Left ventricle myocardium inferior (tissue), 1 donor: ENCODE measurements at regions of chr3 and their contacts with region 1.

Region 1: DNA sequence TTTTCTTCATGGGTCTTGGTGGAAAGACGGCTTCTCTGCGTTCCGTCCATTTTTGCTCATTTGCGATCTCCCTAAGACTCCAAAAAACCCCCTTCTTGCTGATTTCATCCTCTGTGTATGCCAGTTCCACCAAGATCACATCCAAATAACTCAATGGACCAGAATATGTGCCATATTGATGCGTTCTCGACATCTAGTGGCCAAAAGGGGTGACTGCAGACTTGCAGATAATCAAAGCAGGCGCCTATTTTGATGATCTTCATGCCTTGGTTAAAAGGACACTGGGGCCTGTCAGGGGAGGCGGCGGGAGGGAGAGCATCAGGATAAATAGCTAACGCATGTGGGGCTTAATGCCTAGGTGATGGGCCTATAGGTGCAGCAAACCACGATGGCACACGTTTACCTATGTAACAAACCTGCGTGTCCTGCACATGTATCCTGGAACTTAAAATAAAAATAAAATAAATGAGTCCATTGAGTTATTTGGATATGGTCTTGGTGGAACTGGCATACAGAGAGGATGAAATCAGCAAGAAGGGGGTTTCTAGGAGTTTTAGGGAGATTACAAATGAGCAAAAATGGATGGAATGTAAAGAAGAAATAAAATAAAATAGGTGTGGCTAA is 104.2 kb upstream of the RAD18 start:
- DNase-seq: no peak
- H3K4me3 ChIP-seq: no peak overlapping the region
- H3K27ac ChIP-seq: peak overlapping the region; percentile 55
- H3K4me1 ChIP-seq: peaks cover 37% of the 10 kb centered on the region
- H3K27me3 ChIP-seq: no peaks in the 10 kb centered on the region
- CTCF ChIP-seq: peak; percentile 97

Region 2: GRCh38 chr3:8970971-8971589 is 96.4 kb before region 1 on chr3:
- intact Hi-C with region 1: loop called (anchors 5 kb)
- DNase-seq: no peak
- H3K4me3 ChIP-seq: no peak overlapping the region
- H3K27ac ChIP-seq: no peak overlapping the region
- H3K4me1 ChIP-seq: peaks cover 4% of the 10 kb centered on the region
- H3K27me3 ChIP-seq: peaks cover 24% of the 10 kb centered on the region
- CTCF ChIP-seq: no peak

Region 3: GRCh38 chr3:8987645-8988383 is 79.7 kb before region 1 on chr3:
- intact Hi-C with region 1: loop called (anchors 5 kb)
- DNase-seq: peak; percentile 53
- H3K4me3 ChIP-seq: no peak overlapping the region
- H3K27ac ChIP-seq: no peak overlapping the region
- H3K4me1 ChIP-seq: peaks cover 19% of the 10 kb centered on the region
- H3K27me3 ChIP-seq: no peaks in the 10 kb centered on the region
- CTCF ChIP-seq: peak; percentile 83

Region 4: DNA sequence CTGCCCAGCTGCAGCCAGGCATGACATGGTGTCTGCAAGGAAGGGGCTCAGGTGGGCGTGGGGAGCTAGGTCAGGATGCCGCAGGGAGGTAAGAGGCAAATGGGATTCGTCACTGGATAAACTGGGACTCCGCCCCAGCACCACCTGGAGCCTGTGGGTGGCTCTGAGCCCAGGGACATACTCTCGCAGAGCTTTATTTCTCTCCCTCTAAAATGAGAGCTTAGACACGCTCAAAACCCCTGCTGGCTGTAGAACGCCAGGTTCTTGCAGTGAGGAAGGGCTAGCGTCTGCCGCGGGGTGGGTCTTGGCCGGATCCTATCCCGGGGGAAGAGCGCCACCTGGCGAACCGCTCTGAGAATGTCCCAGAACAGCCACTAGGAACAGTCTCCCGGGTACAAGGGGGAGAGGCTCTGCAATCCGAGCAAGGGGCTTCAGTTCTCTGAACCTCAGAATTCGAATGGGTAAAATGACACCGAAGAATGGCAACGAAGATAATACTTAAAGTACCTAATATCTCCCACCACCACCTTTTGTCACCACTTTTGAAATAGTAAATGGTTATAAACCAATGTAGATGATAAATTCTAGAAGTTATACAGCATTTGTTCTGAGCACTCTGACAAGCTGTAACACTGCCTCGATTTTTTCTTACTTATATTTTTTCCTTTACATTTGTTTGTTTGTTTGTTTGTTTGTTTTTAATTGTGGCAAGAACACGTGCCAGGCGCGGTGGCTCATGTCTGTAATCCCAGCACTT is 235.1 kb after region 1 on chr3:
- intact Hi-C with region 1: loop called (anchors 5 kb)
- DNase-seq: peak; percentile 72
- H3K4me3 ChIP-seq: peak overlapping the region; percentile 53
- H3K27ac ChIP-seq: no peak overlapping the region
- H3K4me1 ChIP-seq: peaks cover 5% of the 10 kb centered on the region
- H3K27me3 ChIP-seq: no peaks in the 10 kb centered on the region
- CTCF ChIP-seq: peak; percentile 92